B cell (primary cell): ENCODE measurements at regions of chr1 and their contacts with region 1.

Region 1: GRCh38 chr1:50978144-50978851 is 8.3 kb downstream of the CDKN2C start:
- DNase-seq: peak; percentile 67
- ATAC-seq: peak; percentile 54
- H3K4me3 ChIP-seq: peak overlapping the region; percentile 21 to 76 (median 62)
- H3K4me3 Mint-ChIP-seq: peak overlapping the region; percentile 85
- H3K27ac ChIP-seq: no peak overlapping the region
- H3K27ac Mint-ChIP-seq: peak overlapping the region; percentile 26
- H3K4me1 ChIP-seq: peaks cover 25 to 31% of the 10 kb centered on the region in 2 donors
- H3K4me1 Mint-ChIP-seq: peaks cover 20% of the 10 kb centered on the region
- H3K27me3 ChIP-seq: peaks cover 0 to 44% (median 36%) of the 10 kb centered on the region in 4 experiments
- H3K27me3 Mint-ChIP-seq: peaks cover 27% of the 10 kb centered on the region
- CTCF ChIP-seq: no peak

Region 2: DNA sequence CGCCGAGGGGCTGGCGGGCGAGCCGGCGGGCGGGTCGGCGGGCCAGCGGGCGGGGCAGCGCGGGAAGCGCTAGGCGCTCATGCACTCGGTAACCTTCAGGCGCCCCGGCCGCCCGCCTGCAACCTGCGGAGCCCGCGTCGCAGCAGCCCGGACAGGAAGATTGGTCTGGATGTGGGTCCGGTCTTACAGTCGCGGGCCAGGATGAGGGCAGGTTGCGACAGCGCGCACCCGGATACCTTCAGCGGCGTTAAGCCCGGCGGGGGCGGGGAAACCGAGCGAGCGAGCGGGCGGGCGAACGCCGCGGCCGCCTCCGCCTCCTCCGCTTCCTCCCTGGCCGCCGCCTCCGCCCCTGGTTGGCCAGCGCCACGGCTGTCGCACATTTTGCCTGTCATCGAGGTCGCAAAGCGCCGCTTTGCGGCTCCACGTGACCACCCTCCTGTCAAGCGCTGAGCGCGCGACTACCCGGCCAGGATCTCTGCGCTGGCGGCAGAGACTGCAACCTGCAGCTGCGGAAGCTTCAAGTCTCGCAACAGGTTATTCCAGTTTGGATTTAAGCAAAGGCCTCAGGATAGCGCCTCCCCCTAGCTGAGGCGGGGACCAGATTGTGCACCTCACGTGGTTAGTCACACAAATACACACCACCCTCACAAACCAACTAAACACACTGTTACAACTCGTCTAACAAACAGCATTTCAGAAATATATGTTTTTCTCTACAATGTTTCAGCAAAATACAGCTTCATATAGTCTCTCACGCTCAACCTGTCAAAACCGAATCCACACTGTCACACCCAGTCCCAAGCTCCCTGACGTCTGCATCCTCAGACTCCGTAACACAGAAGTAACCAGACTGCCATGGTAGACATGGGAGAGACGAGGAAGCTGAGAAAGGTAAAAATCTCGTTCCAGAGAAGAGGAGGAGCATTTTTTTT is 18.1 kb before region 1 on chr1 and contains the start of gene FAF1:
- CTCF ChIA-PET with region 1: interaction called, 3 read pairs
- POLR2A ChIA-PET with region 1: interaction called, 3 read pairs
- intact Hi-C with region 1: loop called (anchors 1 kb)
- DNase-seq: peak; percentile 99
- ATAC-seq: peak; percentile 92
- H3K4me3 ChIP-seq: peak within 1 kb of the TSS; percentile 69 to 94 (median 78)
- H3K4me3 Mint-ChIP-seq: peak within 1 kb of the TSS; percentile 94
- H3K27ac ChIP-seq: peak within 1 kb of the TSS; percentile 67 to 76
- H3K27ac Mint-ChIP-seq: peak within 1 kb of the TSS; percentile 99
- H3K4me1 ChIP-seq: peaks cover 18 to 19% of the 10 kb centered on the region in 2 donors
- H3K4me1 Mint-ChIP-seq: peaks cover 24% of the 10 kb centered on the region
- H3K27me3 ChIP-seq: no peaks in the 10 kb centered on the region
- H3K27me3 Mint-ChIP-seq: no peaks in the 10 kb centered on the region
- CTCF ChIP-seq: peak; percentile 24
- total RNA-seq, gene FAF1: 58.4 and 61.1 TPM in 2 replicates